ENCODE measurements at regions of chr5 and their contacts with region 1.

Region 1: GRCh38 chr5:154540600-154540999 is 62.6 kb upstream of the HAND1 start:
- DNase-seq: no peak
- ATAC-seq: no peak
- H3K4me3 ChIP-seq: no peak overlapping the region
- H3K27ac ChIP-seq: no peak overlapping the region
- H3K4me1 ChIP-seq: no peaks in the 10 kb centered on the region
- H3K27me3 ChIP-seq: peaks cover 44% of the 10 kb centered on the region
- CTCF ChIP-seq: no peak

Region 2: GRCh38 chr5:154568589-154568988 is 28.0 kb after region 1 on chr5:
- CTCF ChIA-PET with region 1: no interaction called
- POLR2A ChIA-PET with region 1: interaction called, 15 read pairs
- intact Hi-C with region 1: no loop called
- DNase-seq: no peak
- ATAC-seq: no peak
- H3K4me3 ChIP-seq: no peak overlapping the region
- H3K27ac ChIP-seq: no peak overlapping the region
- H3K4me1 ChIP-seq: no peaks in the 10 kb centered on the region
- H3K27me3 ChIP-seq: peaks cover 18% of the 10 kb centered on the region
- CTCF ChIP-seq: no peak